GM23248 (cell line): ENCODE measurements at regions of chr12 and their contacts with region 1.

Region 1: GRCh38 chr12:80269803-80270552 is 170.6 kb downstream of the OTOGL start:
- DNase-seq: peak; percentile 67
- H3K4me3 ChIP-seq: peak overlapping the region; percentile 44
- H3K27ac ChIP-seq: peak overlapping the region; percentile 58
- H3K4me1 ChIP-seq: peaks cover 24% of the 10 kb centered on the region
- H3K27me3 ChIP-seq: no peaks in the 10 kb centered on the region

Region 2: GRCh38 chr12:79407671-79408622 is 862.0 kb before region 1 on chr12:
- in situ Hi-C with region 1: loop called (anchors 25 kb)
- DNase-seq: peak; percentile 90
- H3K4me3 ChIP-seq: peak overlapping the region; percentile 6; the same call in 1 of the 2 replicates
- H3K27ac ChIP-seq: peak overlapping the region; percentile 58
- H3K4me1 ChIP-seq: peaks cover 49% of the 10 kb centered on the region
- H3K27me3 ChIP-seq: no peaks in the 10 kb centered on the region

Region 3: GRCh38 chr12:80200408-80200807 is 69.6 kb before region 1 on chr12:
- in situ Hi-C with region 1: loop called (anchors 10 kb)
- DNase-seq: no peak
- H3K4me3 ChIP-seq: no peak overlapping the region
- H3K27ac ChIP-seq: no peak overlapping the region
- H3K4me1 ChIP-seq: no peaks in the 10 kb centered on the region
- H3K27me3 ChIP-seq: no peaks in the 10 kb centered on the region

Region 4: DNA sequence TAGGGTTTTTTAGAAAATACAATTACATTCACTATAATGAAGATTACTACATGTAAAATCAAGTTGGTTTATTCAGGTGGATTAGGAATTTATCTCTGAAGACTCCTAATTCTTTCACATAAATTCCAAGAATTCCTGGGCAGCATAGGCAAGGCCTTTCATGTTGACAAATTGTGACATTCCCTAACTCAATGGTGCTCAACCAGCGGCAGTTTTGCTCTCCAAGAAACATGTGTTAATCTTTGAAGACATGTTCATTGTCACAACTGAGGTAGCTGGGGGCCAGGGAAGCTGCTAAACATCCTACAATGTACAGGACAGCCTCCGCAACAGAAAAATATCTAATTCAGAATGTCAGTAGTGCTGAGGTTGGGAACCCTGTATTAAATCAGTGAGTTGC is 220.4 kb after region 1 on chr12:
- in situ Hi-C with region 1: no loop called
- DNase-seq: no peak
- H3K4me3 ChIP-seq: no peak overlapping the region
- H3K27ac ChIP-seq: no peak overlapping the region
- H3K4me1 ChIP-seq: 0 out of 2 replicates have a peak, but pooled peaks cover 3% of the 10 kb centered on the region
- H3K27me3 ChIP-seq: no peaks in the 10 kb centered on the region